GM12878 (cell line): ENCODE measurements at regions of chr1 and their contacts with region 1.

Region 1: GRCh38 chr1:156892190-156893047 is 1.1 kb upstream of the PEAR1 start:
- DNase-seq: no peak
- ATAC-seq: peak; percentile 95
- H3K4me3 ChIP-seq: no peak overlapping the region
- H3K27ac ChIP-seq: no peak overlapping the region
- H3K4me1 ChIP-seq: no peaks in the 10 kb centered on the region
- H3K27me3 ChIP-seq: peaks cover 5 to 11% of the 10 kb centered on the region in 2 experiments
- CTCF ChIP-seq: peak; percentile 63 to 87 (median 68)
- EP300 ChIP-seq: no peak
- POLR2A ChIP-seq: no peak
- RAD21 ChIP-seq: peak; percentile 38; the same call in 1 of the 2 replicates

Region 2: GRCh38 chr1:156797212-156797871 is 95.1 kb before region 1 on chr1:
- CTCF ChIA-PET with region 1: interaction called, 43 read pairs
- POLR2A ChIA-PET with region 1: no interaction called
- RAD21 ChIA-PET with region 1: interaction called, 7 read pairs
- SMC1A ChIA-PET with region 1: interaction called, 14 read pairs
- in situ Hi-C with region 1: no loop called
- intact Hi-C with region 1: loop called (anchors 1 kb)
- DNase-seq: no peak
- ATAC-seq: peak; percentile 94
- H3K4me3 ChIP-seq: no peak overlapping the region
- H3K27ac ChIP-seq: no peak overlapping the region
- H3K4me1 ChIP-seq: peaks cover 17% of the 10 kb centered on the region
- H3K27me3 ChIP-seq: no peaks in the 10 kb centered on the region
- CTCF ChIP-seq: peak; percentile 78 to 88 (median 82)
- EP300 ChIP-seq: no peak
- POLR2A ChIP-seq: no peak
- RAD21 ChIP-seq: peak; percentile 84

Region 3: GRCh38 chr1:156880473-156880872 is 11.9 kb before region 1 on chr1:
- CTCF ChIA-PET with region 1: interaction called, 13 read pairs
- POLR2A ChIA-PET with region 1: no interaction called
- RAD21 ChIA-PET with region 1: no interaction called
- SMC1A ChIA-PET with region 1: interaction called, 5 read pairs
- in situ Hi-C with region 1: no loop called
- intact Hi-C with region 1: no loop called
- DNase-seq: no peak
- ATAC-seq: no peak
- H3K4me3 ChIP-seq: no peak overlapping the region
- H3K27ac ChIP-seq: no peak overlapping the region
- H3K4me1 ChIP-seq: no peaks in the 10 kb centered on the region
- H3K27me3 ChIP-seq: peaks cover 0 to 11% of the 10 kb centered on the region in 2 experiments; a peak in 3 of 4 replicates
- CTCF ChIP-seq: no peak
- EP300 ChIP-seq: no peak
- POLR2A ChIP-seq: no peak
- RAD21 ChIP-seq: no peak

Region 4: GRCh38 chr1:156927215-156928042 is 35.0 kb after region 1 on chr1:
- CTCF ChIA-PET with region 1: interaction called, 25 read pairs
- POLR2A ChIA-PET with region 1: no interaction called
- RAD21 ChIA-PET with region 1: interaction called, 4 read pairs
- SMC1A ChIA-PET with region 1: no interaction called
- in situ Hi-C with region 1: no loop called
- intact Hi-C with region 1: loop called (anchors 1 kb)
- DNase-seq: no peak
- ATAC-seq: peak; percentile 79
- H3K4me3 ChIP-seq: no peak overlapping the region
- H3K27ac ChIP-seq: no peak overlapping the region
- H3K4me1 ChIP-seq: no peaks in the 10 kb centered on the region
- H3K27me3 ChIP-seq: peaks cover 16 to 22% of the 10 kb centered on the region in 2 experiments
- CTCF ChIP-seq: peak; percentile 53 to 76 (median 66)
- EP300 ChIP-seq: no peak
- POLR2A ChIP-seq: no peak
- RAD21 ChIP-seq: peak; percentile 52

Region 5: GRCh38 chr1:156961709-156962108 is 69.3 kb after region 1 on chr1:
- CTCF ChIA-PET with region 1: interaction called, 4 read pairs
- POLR2A ChIA-PET with region 1: no interaction called
- RAD21 ChIA-PET with region 1: no interaction called
- SMC1A ChIA-PET with region 1: interaction called, 4 read pairs
- in situ Hi-C with region 1: no loop called
- intact Hi-C with region 1: loop called (anchors 1 kb)
- DNase-seq: no peak
- ATAC-seq: peak; percentile 86
- H3K4me3 ChIP-seq: no peak overlapping the region
- H3K27ac ChIP-seq: no peak overlapping the region
- H3K4me1 ChIP-seq: peaks cover 3% of the 10 kb centered on the region
- H3K27me3 ChIP-seq: no peaks in the 10 kb centered on the region; a peak in 1 of 4 replicates
- CTCF ChIP-seq: peak; percentile 47 to 59 (median 53)
- EP300 ChIP-seq: no peak
- POLR2A ChIP-seq: no peak
- RAD21 ChIP-seq: peak; percentile 36; the same call in 1 of the 2 replicates